K562 (cell line): ENCODE measurements at regions of chr6 and their contacts with region 1.

Region 1: GRCh38 chr6:134523903-134524650 is 206.2 kb upstream of the SGK1 start:
- DNase-seq: no peak
- ATAC-seq: no peak
- H3K4me3 ChIP-seq: no peak overlapping the region
- H3K27ac ChIP-seq: no peak overlapping the region
- H3K4me1 ChIP-seq: peaks cover 0 to 17% of the 10 kb centered on the region in 2 experiments; a peak in 3 of 5 replicates
- H3K27me3 ChIP-seq: no peaks in the 10 kb centered on the region; a peak in 1 of 5 replicates
- CTCF ChIP-seq: no peak
- EP300 ChIP-seq: no peak
- POLR2A ChIP-seq: no peak
- RAD21 ChIP-seq: no peak

Region 2: GRCh38 chr6:134512981-134513391 is 11.1 kb before region 1 on chr6:
- CTCF ChIA-PET with region 1: no interaction called
- POLR2A ChIA-PET with region 1: interaction called, 15 read pairs
- in situ Hi-C with region 1: no loop called
- intact Hi-C with region 1: no loop called
- DNase-seq: no peak
- ATAC-seq: no peak
- H3K4me3 ChIP-seq: no peak overlapping the region
- H3K27ac ChIP-seq: no peak overlapping the region
- H3K4me1 ChIP-seq: no peaks in the 10 kb centered on the region; a peak in 1 of 5 replicates
- H3K27me3 ChIP-seq: no peaks in the 10 kb centered on the region
- CTCF ChIP-seq: no peak
- EP300 ChIP-seq: no peak
- POLR2A ChIP-seq: no peak
- RAD21 ChIP-seq: no peak

Region 3: DNA sequence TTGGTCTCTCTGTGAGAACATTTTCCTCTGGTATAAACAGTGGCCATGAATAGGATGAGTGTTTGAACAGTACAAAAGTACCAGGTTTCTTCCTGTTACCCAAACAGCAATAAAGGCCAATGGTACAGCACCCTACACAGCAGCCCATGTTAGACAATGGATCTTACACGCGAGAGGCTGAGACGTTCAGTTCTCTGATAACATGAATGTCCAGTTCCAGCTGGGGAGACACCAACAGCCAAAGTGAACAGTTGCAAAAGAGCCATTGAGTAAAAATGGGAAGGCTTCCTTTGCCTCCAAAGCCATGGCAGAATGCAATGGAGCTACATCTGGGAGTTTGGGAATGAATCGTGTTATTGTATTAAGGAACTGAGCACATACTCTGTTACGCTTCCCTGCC is 40.6 kb after region 1 on chr6:
- CTCF ChIA-PET with region 1: no interaction called
- POLR2A ChIA-PET with region 1: no interaction called
- in situ Hi-C with region 1: no loop called
- intact Hi-C with region 1: no loop called
- DNase-seq: no peak
- ATAC-seq: no peak
- H3K4me3 ChIP-seq: no peak overlapping the region
- H3K27ac ChIP-seq: no peak overlapping the region
- H3K4me1 ChIP-seq: no peaks in the 10 kb centered on the region
- H3K27me3 ChIP-seq: no peaks in the 10 kb centered on the region
- CTCF ChIP-seq: no peak
- EP300 ChIP-seq: no peak
- POLR2A ChIP-seq: no peak
- RAD21 ChIP-seq: no peak